ENCODE measurements at regions of chr17 and their contacts with region 1.

Region 1: DNA sequence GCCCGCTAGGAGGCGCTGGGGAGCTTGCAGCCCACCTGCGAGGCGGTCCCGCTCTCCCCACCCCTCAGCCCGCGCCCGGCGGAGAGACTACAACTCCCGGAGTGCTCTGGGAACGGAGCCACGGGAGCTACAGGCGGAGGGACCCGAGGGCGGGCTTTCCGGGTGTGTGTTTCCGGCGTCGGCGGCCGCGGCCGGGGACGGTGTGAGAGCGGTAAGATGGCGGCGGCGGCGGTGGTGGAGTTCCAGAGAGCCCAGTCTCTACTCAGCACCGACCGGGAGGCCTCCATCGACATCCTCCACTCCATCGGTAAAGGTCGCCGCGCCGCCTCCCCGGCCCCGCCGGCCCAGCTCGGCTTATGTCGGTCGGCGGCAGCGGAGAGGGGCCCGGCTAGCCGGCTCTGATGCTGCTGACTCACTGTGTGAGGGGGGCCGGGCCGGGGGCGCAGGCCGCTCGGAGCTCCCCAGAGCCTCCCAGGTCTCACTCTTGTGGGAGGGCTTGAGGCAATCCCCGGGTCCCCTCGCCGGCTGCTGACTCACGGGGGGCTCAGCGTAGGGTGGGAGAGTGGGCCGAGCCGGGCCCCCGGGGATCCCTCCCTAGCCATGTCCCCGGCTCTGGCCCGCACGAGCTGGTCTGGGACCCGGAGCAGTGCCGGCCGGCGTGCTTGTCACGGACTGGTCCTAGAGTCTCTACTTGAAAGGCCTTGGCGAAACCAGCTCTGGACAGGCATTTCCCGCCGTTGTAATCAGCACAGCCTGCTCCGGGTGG is at the start of gene PSMD11:
- DNase-seq: peak; percentile 98 to 99 (median 99)
- H3K4me3 ChIP-seq: peak within 1 kb of the TSS; percentile 66 to 71
- H3K4me3 Mint-ChIP-seq: peak within 1 kb of the TSS; percentile 85 to 96 (median 90)
- H3K27ac ChIP-seq: peak within 1 kb of the TSS; percentile 79
- H3K27ac Mint-ChIP-seq: peak within 1 kb of the TSS; percentile 33 to 96 (median 90)
- H3K4me1 ChIP-seq: peaks cover 27% of the 10 kb centered on the region
- H3K4me1 Mint-ChIP-seq: peaks cover 21 to 43% (median 31%) of the 10 kb centered on the region in 4 donors
- H3K27me3 ChIP-seq: no peaks in the 10 kb centered on the region
- H3K27me3 Mint-ChIP-seq: no peaks in the 10 kb centered on the region
- total RNA-seq, gene PSMD11: 58.0 to 68.2 TPM

Region 2: GRCh38 chr17:32349854-32350665 is 94.4 kb before region 1 on chr17 and contains the start of gene ZNF207:
- CTCF ChIA-PET with region 1: interaction called, 3 read pairs
- POLR2A ChIA-PET with region 1: interaction called, 10 read pairs
- intact Hi-C with region 1: loop called (anchors 2 kb)
- DNase-seq: peak; percentile 94 to 96 (median 95)
- H3K4me3 ChIP-seq: peak within 1 kb of the TSS; percentile 96 to 100
- H3K4me3 Mint-ChIP-seq: peak within 1 kb of the TSS; percentile 97 to 100 (median 100)
- H3K27ac ChIP-seq: peak within 1 kb of the TSS; percentile 100
- H3K27ac Mint-ChIP-seq: peak within 1 kb of the TSS; percentile 98 to 100 (median 100)
- H3K4me1 ChIP-seq: peaks cover 45% of the 10 kb centered on the region
- H3K4me1 Mint-ChIP-seq: peaks cover 23 to 54% (median 38%) of the 10 kb centered on the region in 4 donors
- H3K27me3 ChIP-seq: no peaks in the 10 kb centered on the region
- H3K27me3 Mint-ChIP-seq: no peaks in the 10 kb centered on the region
- total RNA-seq, gene ZNF207: 267 to 298 TPM

Region 3: GRCh38 chr17:32429598-32429997 is 14.9 kb before region 1 on chr17:
- CTCF ChIA-PET with region 1: interaction called, 14 read pairs
- POLR2A ChIA-PET with region 1: interaction called, 3 read pairs
- intact Hi-C with region 1: no loop called
- DNase-seq: no peak
- H3K4me3 ChIP-seq: no peak overlapping the region
- H3K4me3 Mint-ChIP-seq: no peak overlapping the region
- H3K27ac ChIP-seq: no peak overlapping the region
- H3K27ac Mint-ChIP-seq: no peak overlapping the region
- H3K4me1 ChIP-seq: no peaks in the 10 kb centered on the region
- H3K4me1 Mint-ChIP-seq: no peaks in the 10 kb centered on the region
- H3K27me3 ChIP-seq: no peaks in the 10 kb centered on the region
- H3K27me3 Mint-ChIP-seq: no peaks in the 10 kb centered on the region

Measured in CD4-positive, alpha-beta memory T cell (primary cell).